Activated B cell treated with CpG ODN at 0.5 μM for 24 hours (primary cell): ENCODE measurements at regions of chr3 and their contacts with region 1.

Region 1: GRCh38 chr3:98593046-98593936 is at the start of gene CPOX:
- DNase-seq: peak; percentile 70
- ATAC-seq: peak; percentile 95
- H3K4me3 Mint-ChIP-seq: peak within 1 kb of the TSS; percentile 97
- H3K27ac Mint-ChIP-seq: peak within 1 kb of the TSS; percentile 91
- H3K4me1 Mint-ChIP-seq: peaks cover 33% of the 10 kb centered on the region
- H3K27me3 Mint-ChIP-seq: no peaks in the 10 kb centered on the region
- CTCF ChIP-seq: no peak
- total RNA-seq, gene CPOX: 17.3 and 17.5 TPM in 2 replicates

Region 2: DNA sequence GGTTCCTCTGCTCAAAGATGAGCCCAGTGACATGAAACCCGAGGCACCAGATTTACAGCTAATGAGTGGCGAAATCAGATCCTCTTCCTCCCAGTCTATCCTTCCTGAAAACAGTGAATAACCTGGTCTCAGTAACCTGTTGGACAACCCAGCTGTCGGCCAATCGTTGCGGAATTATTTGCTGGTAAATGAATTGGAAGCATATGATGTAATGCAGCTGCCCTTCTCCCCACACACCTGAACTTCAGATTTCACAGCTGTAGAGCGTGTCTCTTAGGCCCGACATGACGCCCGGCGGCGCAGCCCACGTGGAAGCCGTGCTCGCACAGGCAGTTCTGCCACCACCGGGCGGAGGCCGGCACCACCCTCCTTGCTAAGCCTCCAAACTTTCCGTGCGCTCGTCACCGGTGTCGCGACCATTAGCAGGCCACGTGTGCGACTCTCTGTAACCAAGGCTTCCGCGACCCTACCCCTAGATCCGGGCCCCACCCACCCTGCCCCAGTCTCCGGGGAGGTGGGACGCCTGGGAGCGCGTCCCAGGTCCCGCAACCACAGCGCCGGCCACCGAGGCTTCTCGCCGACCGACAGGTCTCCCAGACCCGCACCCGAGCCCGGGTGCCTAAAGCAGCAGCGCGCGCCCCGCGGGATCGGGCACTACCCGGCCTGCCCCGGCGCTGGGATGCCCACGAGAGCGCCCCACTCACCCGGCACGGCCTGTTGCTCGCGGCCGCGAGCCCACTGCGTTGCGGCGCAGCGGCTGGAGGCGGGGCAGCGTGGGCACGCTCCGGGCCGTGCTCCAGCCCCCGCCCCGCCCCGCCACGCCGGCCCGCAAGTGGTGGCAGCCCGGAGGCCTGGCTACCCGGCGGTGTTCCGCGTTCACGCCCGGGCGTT is 621.4 kb before region 1 on chr3 and contains the start of gene RIOX2:
- CTCF ChIA-PET with region 1: no interaction called
- POLR2A ChIA-PET with region 1: no interaction called
- intact Hi-C with region 1: loop called (anchors 5 kb)
- DNase-seq: peak; percentile 75
- ATAC-seq: peak; percentile 93
- H3K4me3 Mint-ChIP-seq: peak within 1 kb of the TSS; percentile 89
- H3K27ac Mint-ChIP-seq: peak within 1 kb of the TSS; percentile 87
- H3K4me1 Mint-ChIP-seq: peaks cover 31% of the 10 kb centered on the region
- H3K27me3 Mint-ChIP-seq: no peaks in the 10 kb centered on the region
- CTCF ChIP-seq: no peak
- total RNA-seq, gene RIOX2: 33.7 and 34.8 TPM in 2 replicates

Region 3: GRCh38 chr3:98732286-98733052 is 139.2 kb after region 1 on chr3:
- CTCF ChIA-PET with region 1: no interaction called
- POLR2A ChIA-PET with region 1: no interaction called
- intact Hi-C with region 1: loop called (anchors 5 kb)
- DNase-seq: no peak
- ATAC-seq: peak; percentile 21
- H3K4me3 Mint-ChIP-seq: peak overlapping the region; percentile 70
- H3K27ac Mint-ChIP-seq: no peak overlapping the region
- H3K4me1 Mint-ChIP-seq: peaks cover 18% of the 10 kb centered on the region
- H3K27me3 Mint-ChIP-seq: peaks cover 42% of the 10 kb centered on the region
- CTCF ChIP-seq: no peak

Region 4: GRCh38 chr3:99172736-99173657 is 579.7 kb after region 1 on chr3:
- CTCF ChIA-PET with region 1: no interaction called
- POLR2A ChIA-PET with region 1: no interaction called
- intact Hi-C with region 1: loop called (anchors 2 kb)
- DNase-seq: no peak
- ATAC-seq: no peak
- H3K4me3 Mint-ChIP-seq: no peak overlapping the region
- H3K27ac Mint-ChIP-seq: no peak overlapping the region
- H3K4me1 Mint-ChIP-seq: no peaks in the 10 kb centered on the region
- H3K27me3 Mint-ChIP-seq: no peaks in the 10 kb centered on the region
- CTCF ChIP-seq: no peak

Region 5: DNA sequence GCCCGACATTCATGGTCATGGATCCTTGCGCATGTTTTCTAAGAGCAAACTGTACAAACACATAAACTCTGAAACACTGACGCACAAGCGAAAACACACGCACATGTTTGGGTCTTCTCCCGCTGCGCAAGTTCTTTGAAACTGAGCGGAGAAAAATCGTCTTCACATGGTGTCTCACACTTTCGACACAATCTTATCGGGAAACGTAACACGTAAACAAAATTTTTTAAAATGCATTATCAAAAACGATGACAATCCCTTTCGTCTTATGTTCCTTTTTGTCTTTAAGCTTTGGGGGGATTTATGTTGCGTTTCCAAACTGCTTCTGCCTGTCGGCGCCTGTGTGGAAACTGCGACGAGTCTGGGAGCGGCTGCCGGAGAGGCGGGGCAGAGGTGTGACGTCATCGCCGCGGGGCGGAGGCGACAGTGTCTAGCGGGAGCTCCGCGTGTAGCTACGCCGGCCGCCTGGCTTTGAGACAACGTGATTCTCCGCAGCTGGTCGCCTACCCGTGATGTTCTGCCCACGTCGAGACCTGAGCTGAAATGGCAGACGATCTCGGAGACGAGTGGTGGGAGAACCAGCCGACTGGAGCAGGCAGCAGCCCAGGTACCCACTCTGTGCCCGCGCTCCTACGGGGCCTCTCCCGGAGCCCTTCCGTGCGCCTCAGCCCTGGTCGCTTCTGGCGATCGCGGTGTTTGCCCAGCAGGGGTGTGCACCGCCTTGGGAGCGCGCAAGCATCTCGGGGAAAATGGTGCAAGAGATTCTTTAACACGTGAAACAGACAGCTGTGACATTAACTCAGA is 1224.3 kb after region 1 on chr3 and contains the start of gene CMSS1:
- CTCF ChIA-PET with region 1: no interaction called
- POLR2A ChIA-PET with region 1: no interaction called
- intact Hi-C with region 1: loop called (anchors 10 kb)
- DNase-seq: peak; percentile 96
- ATAC-seq: peak; percentile 94
- H3K4me3 Mint-ChIP-seq: peak within 1 kb of the TSS; percentile 97
- H3K27ac Mint-ChIP-seq: peak within 1 kb of the TSS; percentile 99
- H3K4me1 Mint-ChIP-seq: peaks cover 37% of the 10 kb centered on the region
- H3K27me3 Mint-ChIP-seq: no peaks in the 10 kb centered on the region
- CTCF ChIP-seq: no peak
- total RNA-seq, gene CMSS1: 37.4 and 41.1 TPM in 2 replicates